ENCODE measurements at regions of chr12 and their contacts with region 1.

Region 1: DNA sequence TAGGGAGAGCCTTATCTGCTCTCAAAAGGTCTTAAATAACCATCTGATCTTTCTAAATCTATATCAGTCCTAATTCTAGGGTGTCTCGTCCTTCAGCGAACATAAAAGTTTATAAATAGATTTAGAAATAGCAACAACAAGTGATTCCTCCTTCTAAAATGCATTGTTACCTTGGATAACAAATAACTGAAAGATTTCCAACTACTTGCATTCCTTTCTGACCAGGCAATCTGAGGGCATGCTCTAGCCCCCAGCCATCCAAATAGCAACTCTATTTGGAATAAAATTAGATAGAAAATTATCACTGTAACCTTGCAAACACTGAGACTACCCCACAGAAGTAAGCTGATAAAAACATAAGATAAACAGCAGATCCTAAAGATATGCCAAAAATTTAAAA is 21.8 kb upstream of the KRR1 start:
- DNase-seq: no peak
- ATAC-seq: no peak
- H3K4me3 ChIP-seq: no peak overlapping the region
- H3K27ac ChIP-seq: no peak overlapping the region
- H3K4me1 ChIP-seq: peaks cover 6% of the 10 kb centered on the region
- H3K27me3 ChIP-seq: no peaks in the 10 kb centered on the region
- CTCF ChIP-seq: no peak
- POLR2A ChIP-seq: no peak
- RAD21 ChIP-seq: no peak

Region 2: GRCh38 chr12:75305412-75306332 is 227.6 kb before region 1 on chr12:
- CTCF ChIA-PET with region 1: no interaction called
- POLR2A ChIA-PET with region 1: no interaction called
- dilution Hi-C with region 1: no loop called
- in situ Hi-C with region 1: no loop called
- intact Hi-C with region 1: no loop called
- DNase-seq: no peak
- ATAC-seq: no peak
- H3K4me3 ChIP-seq: no peak overlapping the region
- H3K27ac ChIP-seq: no peak overlapping the region
- H3K4me1 ChIP-seq: no peaks in the 10 kb centered on the region
- H3K27me3 ChIP-seq: no peaks in the 10 kb centered on the region
- CTCF ChIP-seq: no peak
- POLR2A ChIP-seq: no peak
- RAD21 ChIP-seq: no peak

Region 3: GRCh38 chr12:75739912-75740311 is 206.7 kb after region 1 on chr12:
- CTCF ChIA-PET with region 1: interaction called, 10 read pairs
- POLR2A ChIA-PET with region 1: no interaction called
- dilution Hi-C with region 1: no loop called
- in situ Hi-C with region 1: no loop called
- intact Hi-C with region 1: no loop called
- DNase-seq: no peak
- ATAC-seq: no peak
- H3K4me3 ChIP-seq: no peak overlapping the region
- H3K27ac ChIP-seq: no peak overlapping the region
- H3K4me1 ChIP-seq: peaks cover 8% of the 10 kb centered on the region
- H3K27me3 ChIP-seq: no peaks in the 10 kb centered on the region
- CTCF ChIP-seq: no peak
- POLR2A ChIP-seq: no peak
- RAD21 ChIP-seq: no peak

Region 4: DNA sequence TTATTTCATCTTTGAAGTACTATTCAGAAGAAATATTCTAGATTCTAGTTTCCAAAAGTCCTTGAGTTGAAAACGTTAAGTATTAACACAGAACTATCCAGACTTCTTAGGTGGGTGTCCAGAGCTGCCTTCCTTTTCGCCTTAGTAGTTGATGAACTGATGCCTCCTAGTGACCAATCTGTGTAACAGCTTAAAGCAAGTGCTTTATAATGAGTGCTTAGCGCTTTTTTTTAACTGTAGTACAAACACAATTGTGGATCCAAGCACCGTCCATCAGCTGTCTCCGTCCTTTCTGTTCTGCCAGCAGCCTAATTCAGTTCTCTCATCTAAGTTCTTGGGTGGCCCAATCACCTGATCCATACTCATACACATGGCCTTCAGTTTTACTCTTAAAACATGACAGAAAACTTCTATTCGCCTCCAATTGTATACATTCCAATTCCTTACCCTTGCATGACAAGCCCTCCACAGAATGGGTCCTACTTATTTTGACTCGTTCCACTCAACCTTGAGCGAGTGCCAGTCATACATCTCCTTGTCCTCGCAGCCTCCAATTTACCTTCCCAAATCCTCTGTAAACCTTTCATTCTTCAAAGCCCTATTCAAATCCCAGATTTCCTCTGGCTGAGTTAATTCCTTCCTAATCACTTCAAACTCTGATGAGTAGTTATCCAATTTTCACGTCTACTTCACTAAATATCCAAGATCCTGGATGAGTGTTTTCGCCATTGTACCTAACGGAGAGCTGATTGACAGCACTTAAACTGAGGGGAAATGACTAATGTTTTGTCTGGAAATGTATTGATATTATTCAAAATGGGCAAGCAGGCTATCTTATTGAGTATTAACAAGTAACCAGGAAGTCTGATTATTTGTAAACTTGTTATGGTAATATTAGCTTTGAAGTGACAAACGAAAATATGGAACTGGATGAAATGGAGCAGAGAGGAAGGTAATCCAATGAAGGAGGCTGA is 504.2 kb after region 1 on chr12:
- CTCF ChIA-PET with region 1: no interaction called
- POLR2A ChIA-PET with region 1: interaction called, 3 read pairs
- dilution Hi-C with region 1: no loop called
- in situ Hi-C with region 1: loop called (anchors 5 kb)
- intact Hi-C with region 1: no loop called
- DNase-seq: peak; percentile 87
- ATAC-seq: peak; percentile 58
- H3K4me3 ChIP-seq: no peak overlapping the region
- H3K27ac ChIP-seq: no peak overlapping the region
- H3K4me1 ChIP-seq: peaks cover 11% of the 10 kb centered on the region
- H3K27me3 ChIP-seq: no peaks in the 10 kb centered on the region
- CTCF ChIP-seq: peak; percentile 87
- POLR2A ChIP-seq: no peak
- RAD21 ChIP-seq: peak; percentile 90

Measured in IMR-90 (cell line).